ENCODE measurements at regions of chr2 and their contacts with region 1.

Region 1: GRCh38 chr2:11124503-11125068 is 30.7 kb upstream of the SLC66A3 start:
- DNase-seq: peak; percentile 85
- CTCF ChIP-seq: peak; percentile 81

Region 2: GRCh38 chr2:10832203-10832936 is 292.2 kb before region 1 on chr2:
- in situ Hi-C with region 1: loop called (anchors 5 kb)
- DNase-seq: peak; percentile 93
- CTCF ChIP-seq: peak; percentile 99

Region 3: GRCh38 chr2:10911261-10912075 is 213.1 kb before region 1 on chr2 and contains the start of gene KCNF1:
- in situ Hi-C with region 1: no loop called
- DNase-seq: no peak
- CTCF ChIP-seq: no peak

Region 4: DNA sequence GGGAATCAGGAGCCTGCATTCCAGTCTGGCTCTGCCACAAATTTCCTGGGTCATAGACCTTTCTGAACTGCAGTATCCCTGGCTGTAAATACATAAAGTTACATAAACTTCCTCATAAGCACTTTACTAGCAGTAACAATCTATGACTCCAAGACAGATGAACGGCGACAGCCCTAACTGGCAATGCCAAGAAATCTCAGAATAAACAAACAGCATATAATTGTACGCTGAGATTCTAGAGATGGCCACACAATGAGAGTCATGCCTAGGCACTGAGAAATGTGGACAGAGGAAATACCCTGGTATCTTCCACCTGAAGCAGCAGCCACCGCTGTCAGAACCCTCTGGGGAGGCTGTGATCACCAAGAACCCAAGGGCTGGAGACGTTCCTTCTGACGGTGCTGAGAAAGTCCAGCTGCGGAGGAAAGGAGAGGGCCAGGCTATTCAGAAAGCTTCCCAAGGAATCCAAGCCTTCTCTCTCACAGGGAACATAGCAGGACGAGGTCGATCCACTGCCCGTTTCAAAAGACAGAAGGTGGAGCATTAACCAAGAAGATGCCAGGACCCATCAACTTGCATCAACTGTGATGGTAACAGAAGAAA is 58.6 kb before region 1 on chr2:
- in situ Hi-C with region 1: no loop called
- DNase-seq: no peak
- CTCF ChIP-seq: no peak

Region 5: DNA sequence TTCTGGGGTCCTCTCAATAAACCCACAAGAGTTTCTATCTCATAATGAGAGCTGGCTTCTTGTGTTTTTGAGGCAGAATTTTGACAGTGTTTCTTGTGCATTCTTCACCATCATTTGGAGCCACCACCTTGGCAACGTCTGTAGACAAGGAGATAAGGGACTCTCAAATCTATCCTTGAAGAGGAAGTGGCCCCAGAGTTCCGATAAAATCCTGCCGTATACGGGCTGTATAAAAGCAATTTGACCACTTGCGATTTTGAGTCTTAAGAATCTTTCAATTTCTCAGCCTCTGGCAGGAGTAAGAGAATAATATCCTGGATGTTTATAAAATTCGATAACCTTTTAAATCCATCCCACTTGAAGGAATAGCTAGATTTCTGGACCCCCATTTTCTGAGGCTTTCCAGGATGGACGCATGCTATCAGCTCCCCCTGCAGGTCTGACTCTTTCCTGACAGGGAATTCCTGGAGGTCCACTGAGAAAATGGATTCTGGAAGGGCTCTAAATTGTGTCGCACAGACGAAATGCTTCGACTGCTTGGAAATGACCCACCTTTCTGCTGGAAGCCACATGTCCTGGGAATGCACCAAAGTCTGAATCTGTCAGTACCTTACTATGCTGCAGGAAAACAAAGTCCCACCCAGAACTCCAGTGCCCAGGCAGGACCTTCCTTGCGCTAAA is 287.3 kb after region 1 on chr2:
- in situ Hi-C with region 1: loop called (anchors 25 kb)
- DNase-seq: no peak
- CTCF ChIP-seq: peak; percentile 64

Region 6: GRCh38 chr2:11669454-11670291 is 545.1 kb after region 1 on chr2 and contains the start of gene NTSR2:
- in situ Hi-C with region 1: no loop called
- DNase-seq: no peak
- CTCF ChIP-seq: no peak